Lower lobe of right lung (tissue), 2 donors: ENCODE measurements at regions of chr2 and their contacts with region 1.

Region 1: DNA sequence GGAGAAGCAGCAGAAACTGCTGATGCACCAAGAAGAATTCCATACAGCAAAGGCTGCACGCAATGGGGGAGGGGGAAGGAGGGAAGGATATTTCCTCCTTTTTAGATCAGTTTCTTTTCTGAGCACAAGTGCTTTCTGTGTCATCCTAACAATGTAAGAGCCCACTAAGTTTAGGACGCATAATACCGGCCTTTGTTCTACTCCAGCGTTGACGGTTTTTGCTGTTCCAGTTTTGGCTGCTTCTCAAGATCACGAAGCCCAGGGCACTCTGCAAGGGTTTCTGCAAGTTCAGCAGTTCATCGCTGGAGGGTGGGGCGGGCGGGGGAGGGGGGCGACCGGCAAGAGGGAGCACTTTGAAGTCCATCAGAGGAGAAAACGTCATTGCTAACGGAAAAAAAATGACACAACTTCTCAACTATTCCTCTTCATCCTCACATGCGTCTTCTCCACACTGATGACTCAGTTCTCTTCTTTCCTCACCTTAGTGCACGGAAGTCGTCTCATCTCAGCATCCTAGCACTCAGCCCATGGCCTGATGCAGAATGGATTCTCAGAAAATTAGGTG is 8.7 kb downstream of the FAM178B start:
- DNase-seq: no peak
- ATAC-seq: peak in 1 of 2 donors; percentile 66
- H3K4me3 ChIP-seq: no peak overlapping the region
- H3K27ac ChIP-seq: no peak overlapping the region
- H3K4me1 ChIP-seq: no peaks in the 10 kb centered on the region
- H3K27me3 ChIP-seq: no peaks in the 10 kb centered on the region
- CTCF ChIP-seq: no peak

Region 2: GRCh38 chr2:96685577-96686459 is 291.9 kb before region 1 on chr2:
- intact Hi-C with region 1: no loop called
- DNase-seq: no peak
- ATAC-seq: peak; percentile 25 to 40
- H3K4me3 ChIP-seq: no peak overlapping the region
- H3K27ac ChIP-seq: no peak overlapping the region
- H3K4me1 ChIP-seq: peaks cover 14% of the 10 kb centered on the region
- H3K27me3 ChIP-seq: no peaks in the 10 kb centered on the region
- CTCF ChIP-seq: peak; percentile 13

Region 3: GRCh38 chr2:96856776-96857673 is 120.7 kb before region 1 on chr2:
- intact Hi-C with region 1: loop called (anchors 10 kb)
- DNase-seq: no peak
- ATAC-seq: peak; percentile 0 to 4
- H3K4me3 ChIP-seq: peak overlapping the region; percentile 84
- H3K27ac ChIP-seq: peak overlapping the region; percentile 83
- H3K4me1 ChIP-seq: peaks cover 22% of the 10 kb centered on the region
- H3K27me3 ChIP-seq: peaks cover 4% of the 10 kb centered on the region
- CTCF ChIP-seq: no peak